CD14-positive monocyte (primary cell): ENCODE measurements at regions of chr5 and their contacts with region 1.

Region 1: GRCh38 chr5:127313847-127314473 is 23.4 kb downstream of the MEGF10 start:
- DNase-seq: peak; percentile 32 to 51 (median 49)
- H3K4me3 ChIP-seq: no peak overlapping the region
- H3K4me3 Mint-ChIP-seq: no peak overlapping the region
- H3K27ac ChIP-seq: no peak overlapping the region
- H3K27ac Mint-ChIP-seq: no peak overlapping the region
- H3K4me1 ChIP-seq: no peaks in the 10 kb centered on the region
- H3K4me1 Mint-ChIP-seq: peaks cover 4% of the 10 kb centered on the region
- H3K27me3 ChIP-seq: no peaks in the 10 kb centered on the region
- H3K27me3 Mint-ChIP-seq: peaks cover 0 to 2% (median 2%) of the 10 kb centered on the region in 3 donors
- CTCF ChIP-seq: peak; percentile 86

Region 2: GRCh38 chr5:126656396-126657007 is 657.5 kb before region 1 on chr5:
- intact Hi-C with region 1: loop called (anchors 2 to 5 kb)
- DNase-seq: peak; percentile 34 to 50 (median 49)
- H3K4me3 ChIP-seq: no peak overlapping the region
- H3K4me3 Mint-ChIP-seq: no peak overlapping the region
- H3K27ac ChIP-seq: no peak overlapping the region
- H3K27ac Mint-ChIP-seq: no peak overlapping the region
- H3K4me1 ChIP-seq: peaks cover 6 to 9% of the 10 kb centered on the region in 2 donors
- H3K4me1 Mint-ChIP-seq: peaks cover 10% of the 10 kb centered on the region
- H3K27me3 ChIP-seq: no peaks in the 10 kb centered on the region
- H3K27me3 Mint-ChIP-seq: peaks cover 0 to 2% (median 1%) of the 10 kb centered on the region in 3 donors
- CTCF ChIP-seq: peak; percentile 92

Region 3: GRCh38 chr5:126896170-126896717 is 417.7 kb before region 1 on chr5:
- intact Hi-C with region 1: no loop called
- DNase-seq: no peak
- H3K4me3 ChIP-seq: no peak overlapping the region
- H3K4me3 Mint-ChIP-seq: no peak overlapping the region
- H3K27ac ChIP-seq: no peak overlapping the region
- H3K27ac Mint-ChIP-seq: peak overlapping the region in 2 of 7 donors; percentile 48 to 70
- H3K4me1 ChIP-seq: no peaks in the 10 kb centered on the region
- H3K4me1 Mint-ChIP-seq: no peaks in the 10 kb centered on the region
- H3K27me3 ChIP-seq: no peaks in the 10 kb centered on the region
- H3K27me3 Mint-ChIP-seq: no peaks in the 10 kb centered on the region
- CTCF ChIP-seq: no peak

Region 4: GRCh38 chr5:127330116-127330515 is 16.2 kb after region 1 on chr5:
- intact Hi-C with region 1: no loop called
- DNase-seq: no peak
- H3K4me3 ChIP-seq: no peak overlapping the region
- H3K4me3 Mint-ChIP-seq: no peak overlapping the region
- H3K27ac ChIP-seq: no peak overlapping the region
- H3K27ac Mint-ChIP-seq: no peak overlapping the region
- H3K4me1 ChIP-seq: no peaks in the 10 kb centered on the region
- H3K4me1 Mint-ChIP-seq: peaks cover 3% of the 10 kb centered on the region
- H3K27me3 ChIP-seq: no peaks in the 10 kb centered on the region
- H3K27me3 Mint-ChIP-seq: peaks cover 0 to 2% (median 2%) of the 10 kb centered on the region in 3 donors
- CTCF ChIP-seq: no peak